ENCODE measurements at regions of chr20 and their contacts with region 1.

Region 1: DNA sequence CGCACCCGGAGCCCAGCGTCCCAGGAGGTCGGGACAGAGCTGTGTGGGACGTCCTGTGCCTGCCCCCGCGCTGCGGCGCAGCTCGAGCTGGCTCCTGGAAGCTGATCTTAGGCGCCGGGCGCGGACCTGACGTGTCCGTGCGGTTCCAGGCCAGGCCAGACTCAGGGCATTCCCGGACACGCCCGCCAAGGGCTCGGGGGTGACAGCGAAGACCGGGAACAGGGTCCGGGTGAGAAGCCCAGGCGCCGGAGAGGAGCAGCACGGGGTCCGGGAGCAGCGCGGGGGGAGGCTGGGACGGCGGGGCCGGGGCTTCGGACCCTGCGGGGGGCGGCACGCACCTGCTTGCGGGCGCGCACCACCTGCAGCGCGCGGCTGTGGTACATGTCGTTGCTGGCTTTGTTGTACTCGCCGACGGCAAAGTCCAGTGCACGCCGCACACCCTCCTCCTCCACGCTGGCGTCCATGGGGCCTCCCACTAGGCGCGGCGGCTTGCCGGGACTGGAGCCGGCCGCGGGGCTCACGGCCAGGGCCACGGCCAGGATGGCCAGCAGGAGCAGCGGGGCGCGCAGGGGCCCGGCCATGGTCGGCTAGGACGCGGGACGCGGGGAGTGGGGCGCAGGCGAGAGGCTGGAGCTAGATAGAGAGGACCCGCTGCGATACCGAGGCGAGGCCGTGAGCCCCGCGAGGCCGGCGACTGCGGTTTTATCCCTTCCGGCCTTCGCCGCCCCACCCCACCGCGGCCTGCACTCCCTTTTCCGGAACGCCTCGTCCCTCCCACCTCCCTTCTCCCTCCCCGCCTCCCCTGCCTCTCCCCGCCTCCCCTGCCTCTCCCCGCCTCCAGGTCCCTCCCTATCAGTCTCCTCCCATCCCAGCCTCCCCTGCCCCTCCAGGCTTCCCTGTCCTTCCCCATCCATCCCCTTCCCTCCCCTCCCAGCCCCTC is at the start of gene CST3:
- DNase-seq: peak; percentile 55 to 93
- H3K4me3 ChIP-seq: peak within 1 kb of the TSS; percentile 89 to 94
- H3K27ac ChIP-seq: peak within 1 kb of the TSS; percentile 91 to 99
- H3K4me1 ChIP-seq: peaks cover 10 to 22% of the 10 kb centered on the region in 2 donors
- H3K27me3 ChIP-seq: no peaks in the 10 kb centered on the region
- CTCF ChIP-seq: peak in 1 of 3 experiments; percentile 9
- total RNA-seq, gene CST3: 2,609 TPM

Region 2: GRCh38 chr20:23420943-23421931 is 216.3 kb before region 1 on chr20 and contains the start of gene NAPB:
- intact Hi-C with region 1: loop called (anchors 5 kb)
- DNase-seq: peak; percentile 76 to 96
- H3K4me3 ChIP-seq: peak within 1 kb of the TSS; percentile 70 to 99
- H3K27ac ChIP-seq: peak within 1 kb of the TSS; percentile 87 to 91
- H3K4me1 ChIP-seq: peaks cover 0 to 6% of the 10 kb centered on the region in 2 donors
- H3K27me3 ChIP-seq: no peaks in the 10 kb centered on the region
- CTCF ChIP-seq: peak; percentile 40 to 84 (median 44)
- total RNA-seq, gene NAPB: 0.75 TPM

Region 3: GRCh38 chr20:23606652-23607049 is 30.9 kb before region 1 on chr20:
- intact Hi-C with region 1: loop called (anchors 2 kb)
- DNase-seq: peak in 1 of 2 donors; percentile 90
- H3K4me3 ChIP-seq: no peak overlapping the region
- H3K27ac ChIP-seq: no peak overlapping the region
- H3K4me1 ChIP-seq: no peaks in the 10 kb centered on the region
- H3K27me3 ChIP-seq: no peaks in the 10 kb centered on the region
- CTCF ChIP-seq: peak; percentile 72 to 96 (median 91)

Region 4: DNA sequence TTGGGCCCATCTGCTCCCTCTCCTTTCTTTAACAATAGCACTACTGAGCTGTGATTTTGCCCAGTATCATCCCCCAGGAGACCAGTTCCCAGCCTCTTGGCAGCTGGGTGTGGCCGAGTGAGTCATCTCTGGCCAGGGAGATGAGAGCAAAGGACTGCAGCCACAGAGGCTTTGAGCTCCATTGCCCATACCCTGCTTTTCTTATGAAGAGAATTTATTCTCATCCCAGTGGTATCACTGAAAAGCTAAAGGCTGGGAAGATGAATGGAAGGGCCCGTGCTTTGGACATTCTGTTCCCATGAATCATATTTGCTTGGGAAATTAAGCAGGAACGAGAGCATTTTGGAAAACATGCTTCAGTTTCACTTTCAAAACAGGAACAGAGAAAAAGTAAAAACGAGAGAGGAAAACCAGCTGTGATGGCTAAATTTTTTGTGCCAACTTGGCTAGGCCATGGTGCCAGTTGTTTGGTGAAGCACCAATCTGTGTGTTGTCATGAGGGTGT is 14.7 kb before region 1 on chr20:
- intact Hi-C with region 1: loop called (anchors 1 kb)
- DNase-seq: peak; percentile 50 to 88
- H3K4me3 ChIP-seq: peak overlapping the region; percentile 34 to 55
- H3K27ac ChIP-seq: peak overlapping the region; percentile 88 to 91
- H3K4me1 ChIP-seq: peaks cover 0 to 17% of the 10 kb centered on the region in 2 donors
- H3K27me3 ChIP-seq: no peaks in the 10 kb centered on the region
- CTCF ChIP-seq: no peak

Region 5: GRCh38 chr20:25539742-25540672 is 1902.5 kb after region 1 on chr20:
- intact Hi-C with region 1: loop called (anchors 10 kb)
- DNase-seq: no peak
- H3K4me3 ChIP-seq: peak overlapping the region; percentile 36 to 63
- H3K27ac ChIP-seq: peak overlapping the region; percentile 45 to 65
- H3K4me1 ChIP-seq: peaks cover 8 to 34% of the 10 kb centered on the region in 2 donors
- H3K27me3 ChIP-seq: no peaks in the 10 kb centered on the region
- CTCF ChIP-seq: peak; percentile 31 to 61 (median 42)

Measured in ascending aorta (tissue), 2 donors.